SK-N-SH (cell line): ENCODE measurements at regions of chr7 and their contacts with region 1.

Region 1: GRCh38 chr7:23261843-23262452 is 15.4 kb downstream of the GPNMB start:
- DNase-seq: peak; percentile 91
- H3K4me3 ChIP-seq: no peak overlapping the region; a peak in 1 of 4 replicates
- H3K27ac ChIP-seq: no peak overlapping the region
- H3K4me1 ChIP-seq: no peaks in the 10 kb centered on the region; a peak in 1 of 4 replicates
- H3K27me3 ChIP-seq: no peaks in the 10 kb centered on the region
- CTCF ChIP-seq: peak; percentile 99
- EP300 ChIP-seq: no peak
- RAD21 ChIP-seq: peak; percentile 90

Region 2: DNA sequence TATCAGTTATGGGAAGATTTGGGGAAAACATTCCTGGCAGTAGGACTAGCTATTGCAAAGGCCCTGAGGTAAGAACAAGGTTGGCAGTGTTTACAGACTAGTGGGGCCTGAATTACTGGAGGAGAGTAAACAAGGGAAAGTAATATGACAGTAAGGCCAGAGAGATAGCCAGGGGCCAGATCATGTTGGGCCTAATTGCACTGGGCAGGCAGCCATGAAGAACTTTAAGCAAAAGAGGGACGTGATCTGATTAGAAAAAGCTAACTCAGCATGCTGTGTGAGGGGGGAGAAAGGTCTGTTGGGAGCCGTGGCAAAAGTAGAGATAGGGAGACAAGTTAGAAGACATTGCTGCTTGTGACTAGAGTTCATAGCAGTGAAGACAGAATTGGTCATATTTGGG is 70.9 kb before region 1 on chr7:
- CTCF ChIA-PET with region 1: interaction called, 36 read pairs
- POLR2A ChIA-PET with region 1: no interaction called
- DNase-seq: peak; percentile 83
- H3K4me3 ChIP-seq: no peak overlapping the region
- H3K27ac ChIP-seq: peak overlapping the region in 1 of 2 experiments; percentile 70; a peak in 2 of 4 replicates
- H3K4me1 ChIP-seq: peaks cover 0 to 9% of the 10 kb centered on the region in 2 experiments; a peak in 2 of 4 replicates
- H3K27me3 ChIP-seq: no peaks in the 10 kb centered on the region
- CTCF ChIP-seq: no peak
- EP300 ChIP-seq: peak in 1 of 2 experiments; percentile 58; a peak in 1 of 4 replicates
- RAD21 ChIP-seq: 0 out of 2 replicates have a peak, but pooled peaks have one; percentile 26

Region 3: GRCh38 chr7:23242321-23242720 is 19.6 kb before region 1 on chr7:
- CTCF ChIA-PET with region 1: interaction called, 11 read pairs
- POLR2A ChIA-PET with region 1: no interaction called
- DNase-seq: no peak
- H3K4me3 ChIP-seq: no peak overlapping the region
- H3K27ac ChIP-seq: no peak overlapping the region
- H3K4me1 ChIP-seq: peaks cover 6 to 7% of the 10 kb centered on the region in 2 experiments; a peak in 3 of 4 replicates
- H3K27me3 ChIP-seq: no peaks in the 10 kb centered on the region
- CTCF ChIP-seq: no peak
- EP300 ChIP-seq: no peak
- RAD21 ChIP-seq: no peak

Region 4: DNA sequence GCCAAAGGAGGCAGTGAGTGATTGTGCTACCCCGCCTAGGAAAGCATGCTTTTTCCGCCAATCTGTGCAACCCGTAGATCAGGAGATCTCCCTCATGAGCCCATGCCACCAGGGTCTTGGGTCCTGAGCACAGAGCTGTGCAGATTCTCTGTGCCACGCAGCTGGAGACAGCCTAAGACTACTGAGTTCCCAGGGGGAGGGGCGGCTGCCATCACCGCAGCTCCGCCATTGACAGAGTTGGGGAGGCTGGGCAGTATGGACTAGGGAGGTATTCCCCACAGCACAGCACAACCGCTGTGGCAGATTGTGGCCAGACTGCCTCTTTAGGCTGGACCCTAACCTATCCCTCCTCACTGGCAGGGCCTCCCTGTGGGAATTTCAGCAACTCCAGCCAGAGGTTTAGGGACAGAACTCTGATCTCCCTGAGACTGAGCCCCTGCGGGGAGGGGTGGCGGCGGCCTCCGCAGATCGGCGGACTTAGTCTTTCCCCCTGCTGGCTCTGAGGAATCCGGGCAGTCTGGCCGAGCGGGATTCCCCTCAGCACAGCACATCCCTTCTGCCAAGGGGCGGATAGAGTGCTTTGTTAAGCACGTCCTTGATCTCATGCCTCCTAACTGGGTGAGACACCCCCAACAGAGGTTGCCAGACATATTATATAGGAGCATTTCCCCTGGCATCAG is 797.7 kb after region 1 on chr7:
- CTCF ChIA-PET with region 1: no interaction called
- POLR2A ChIA-PET with region 1: no interaction called
- DNase-seq: no peak
- H3K4me3 ChIP-seq: no peak overlapping the region
- H3K27ac ChIP-seq: no peak overlapping the region
- H3K4me1 ChIP-seq: no peaks in the 10 kb centered on the region
- H3K27me3 ChIP-seq: no peaks in the 10 kb centered on the region
- CTCF ChIP-seq: no peak
- EP300 ChIP-seq: no peak
- RAD21 ChIP-seq: no peak